ENCODE measurements at regions of chr1 and their contacts with region 1.

Region 1: GRCh38 chr1:208238710-208239472 is 5.3 kb downstream of the PLXNA2 start:
- DNase-seq: no peak
- H3K4me3 ChIP-seq: no peak overlapping the region
- H3K27ac ChIP-seq: peak overlapping the region in 2 of 3 donors; percentile 7 to 50
- H3K4me1 ChIP-seq: peaks cover 60 to 71% of the 10 kb centered on the region in 2 donors
- H3K27me3 ChIP-seq: no peaks in the 10 kb centered on the region
- CTCF ChIP-seq: peak; percentile 39 to 86 (median 67)
- POLR2A ChIP-seq: no peak

Region 2: GRCh38 chr1:208184088-208184911 is 54.6 kb before region 1 on chr1:
- intact Hi-C with region 1: loop called (anchors 10 kb)
- DNase-seq: peak; percentile 74 to 77
- H3K4me3 ChIP-seq: no peak overlapping the region
- H3K27ac ChIP-seq: peak overlapping the region; percentile 40 to 97 (median 85)
- H3K4me1 ChIP-seq: peaks cover 38 to 69% of the 10 kb centered on the region in 2 donors
- H3K27me3 ChIP-seq: no peaks in the 10 kb centered on the region
- CTCF ChIP-seq: no peak
- POLR2A ChIP-seq: peak in 1 of 2 donors; percentile 18